ENCODE measurements at regions of chr15 and their contacts with region 1.

Region 1: DNA sequence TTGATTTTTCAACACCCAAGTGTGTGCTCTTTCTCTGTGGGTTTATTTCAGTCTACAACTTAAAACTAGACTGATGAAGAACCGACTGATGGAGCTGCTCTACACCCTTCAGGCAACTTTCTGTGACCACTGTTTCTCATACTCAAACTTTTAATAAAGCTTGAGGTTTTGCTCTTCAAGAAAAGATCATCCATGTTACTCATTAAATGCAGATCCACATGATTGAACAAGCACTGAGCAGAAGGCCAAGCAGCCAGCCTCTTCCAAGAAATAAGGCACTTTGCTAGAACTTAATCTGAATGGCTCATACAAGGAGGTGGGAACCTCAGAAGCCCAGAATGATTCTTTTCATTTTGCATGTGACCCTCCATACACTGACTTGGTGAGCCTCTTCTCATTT is 8.7 kb downstream of the SLC27A2 start:
- DNase-seq: no peak
- H3K4me3 ChIP-seq: no peak overlapping the region
- H3K27ac ChIP-seq: no peak overlapping the region
- H3K4me1 ChIP-seq: no peaks in the 10 kb centered on the region
- H3K27me3 ChIP-seq: peaks cover 2 to 5% of the 10 kb centered on the region in 2 experiments
- CTCF ChIP-seq: no peak
- POLR2A ChIP-seq: no peak

Region 2: DNA sequence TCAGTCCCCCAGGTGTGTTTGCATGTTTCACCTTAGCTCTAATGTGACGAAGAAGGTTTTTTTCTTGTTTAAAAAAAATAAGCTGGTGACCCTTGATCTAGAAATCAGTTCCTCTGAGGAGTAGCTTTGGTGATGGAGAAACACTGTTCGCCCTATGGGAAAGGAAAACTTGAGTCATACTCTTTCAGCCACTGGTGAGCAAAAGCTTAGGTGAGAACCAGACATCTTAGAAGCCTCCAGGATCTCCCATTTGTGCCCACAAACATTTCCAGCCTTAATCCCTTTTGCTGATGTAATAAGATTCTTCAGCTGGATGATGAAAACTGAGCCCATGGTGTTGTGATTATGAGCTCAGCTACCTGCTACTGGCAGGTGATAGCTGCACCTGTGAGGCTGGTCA is 29.1 kb after region 1 on chr15:
- CTCF ChIA-PET with region 1: no interaction called
- POLR2A ChIA-PET with region 1: no interaction called
- dilution Hi-C with region 1: no loop called
- intact Hi-C with region 1: no loop called
- DNase-seq: no peak
- H3K4me3 ChIP-seq: no peak overlapping the region
- H3K27ac ChIP-seq: no peak overlapping the region
- H3K4me1 ChIP-seq: no peaks in the 10 kb centered on the region
- H3K27me3 ChIP-seq: peaks cover 2 to 3% of the 10 kb centered on the region in 2 experiments
- CTCF ChIP-seq: no peak
- POLR2A ChIP-seq: no peak

Region 3: GRCh38 chr15:50241684-50242450 is 51.1 kb after region 1 on chr15:
- CTCF ChIA-PET with region 1: no interaction called
- POLR2A ChIA-PET with region 1: no interaction called
- dilution Hi-C with region 1: no loop called
- intact Hi-C with region 1: loop called (anchors 5 kb)
- DNase-seq: no peak
- H3K4me3 ChIP-seq: no peak overlapping the region
- H3K27ac ChIP-seq: no peak overlapping the region
- H3K4me1 ChIP-seq: no peaks in the 10 kb centered on the region
- H3K27me3 ChIP-seq: no peaks in the 10 kb centered on the region
- CTCF ChIP-seq: no peak
- POLR2A ChIP-seq: no peak